IMR-90 (cell line): ENCODE measurements at regions of chr7 and their contacts with region 1.

Region 1: GRCh38 chr7:134834689-134835462 is 55.4 kb downstream of the CALD1 start:
- DNase-seq: peak; percentile 82
- ATAC-seq: peak; percentile 41
- H3K4me3 ChIP-seq: no peak overlapping the region
- H3K27ac ChIP-seq: peak overlapping the region; percentile 51; the same call in 1 of the 2 replicates
- H3K4me1 ChIP-seq: peaks cover 14% of the 10 kb centered on the region
- H3K27me3 ChIP-seq: no peaks in the 10 kb centered on the region
- CTCF ChIP-seq: no peak
- POLR2A ChIP-seq: no peak
- RAD21 ChIP-seq: no peak

Region 2: GRCh38 chr7:134986363-134987251 is 151.7 kb after region 1 on chr7 and contains the start of gene AGBL3:
- CTCF ChIA-PET with region 1: no interaction called
- POLR2A ChIA-PET with region 1: interaction called, 13 read pairs
- dilution Hi-C with region 1: no loop called
- in situ Hi-C with region 1: no loop called
- intact Hi-C with region 1: no loop called
- DNase-seq: peak; percentile 94
- ATAC-seq: peak; percentile 98
- H3K4me3 ChIP-seq: peak within 1 kb of the TSS; percentile 72
- H3K27ac ChIP-seq: peak within 1 kb of the TSS; percentile 83
- H3K4me1 ChIP-seq: peaks cover 3% of the 10 kb centered on the region
- H3K27me3 ChIP-seq: no peaks in the 10 kb centered on the region
- CTCF ChIP-seq: peak; percentile 51
- POLR2A ChIP-seq: no peak
- RAD21 ChIP-seq: no peak
- total RNA-seq, gene AGBL3: 0.18 and 0.28 TPM in 2 replicates